ENCODE measurements at regions of chr22 and their contacts with region 1.

Region 1: GRCh38 chr22:39932918-39933649 is 27.1 kb upstream of the TMA7B start:
- H3K4me3 ChIP-seq: no peak overlapping the region
- H3K27ac ChIP-seq: no peak overlapping the region
- H3K4me1 ChIP-seq: no peaks in the 10 kb centered on the region
- CTCF ChIP-seq: peak; percentile 37; the same call in 1 of the 2 replicates

Region 2: DNA sequence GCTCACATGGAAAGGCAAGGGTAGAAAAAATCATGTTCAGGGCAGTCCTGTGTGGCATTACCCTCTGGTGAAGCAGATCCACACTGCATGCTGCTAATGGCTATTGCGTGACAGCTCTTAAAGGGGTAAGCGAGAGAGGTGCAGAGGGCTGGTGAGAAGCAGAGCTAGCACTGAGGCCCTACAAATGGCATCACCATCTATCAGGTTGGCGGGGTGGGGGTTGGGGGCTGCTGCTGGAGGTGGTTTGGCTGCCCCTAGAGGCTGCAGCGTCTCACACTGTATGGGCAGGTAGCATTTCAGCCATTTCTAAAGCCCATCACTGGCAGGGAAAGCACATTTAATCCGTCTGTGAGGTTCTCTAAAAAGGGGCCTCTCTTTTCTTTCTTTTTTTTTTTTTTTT is 10.3 kb after region 1 on chr22:
- CTCF ChIA-PET with region 1: interaction called, 20 read pairs
- POLR2A ChIA-PET with region 1: interaction called, 3 read pairs
- H3K4me3 ChIP-seq: no peak overlapping the region
- H3K27ac ChIP-seq: no peak overlapping the region
- H3K4me1 ChIP-seq: 0 out of 2 replicates have a peak, but pooled peaks cover 3% of the 10 kb centered on the region
- CTCF ChIP-seq: no peak

Region 3: GRCh38 chr22:39954584-39955055 is 21.5 kb after region 1 on chr22:
- CTCF ChIA-PET with region 1: interaction called, 15 read pairs
- POLR2A ChIA-PET with region 1: no interaction called
- H3K4me3 ChIP-seq: no peak overlapping the region
- H3K27ac ChIP-seq: no peak overlapping the region
- H3K4me1 ChIP-seq: no peaks in the 10 kb centered on the region
- CTCF ChIP-seq: no peak